Dorsolateral prefrontal cortex (tissue), 120 donors: ENCODE measurements at regions of chr17 and their contacts with region 1.

Region 1: DNA sequence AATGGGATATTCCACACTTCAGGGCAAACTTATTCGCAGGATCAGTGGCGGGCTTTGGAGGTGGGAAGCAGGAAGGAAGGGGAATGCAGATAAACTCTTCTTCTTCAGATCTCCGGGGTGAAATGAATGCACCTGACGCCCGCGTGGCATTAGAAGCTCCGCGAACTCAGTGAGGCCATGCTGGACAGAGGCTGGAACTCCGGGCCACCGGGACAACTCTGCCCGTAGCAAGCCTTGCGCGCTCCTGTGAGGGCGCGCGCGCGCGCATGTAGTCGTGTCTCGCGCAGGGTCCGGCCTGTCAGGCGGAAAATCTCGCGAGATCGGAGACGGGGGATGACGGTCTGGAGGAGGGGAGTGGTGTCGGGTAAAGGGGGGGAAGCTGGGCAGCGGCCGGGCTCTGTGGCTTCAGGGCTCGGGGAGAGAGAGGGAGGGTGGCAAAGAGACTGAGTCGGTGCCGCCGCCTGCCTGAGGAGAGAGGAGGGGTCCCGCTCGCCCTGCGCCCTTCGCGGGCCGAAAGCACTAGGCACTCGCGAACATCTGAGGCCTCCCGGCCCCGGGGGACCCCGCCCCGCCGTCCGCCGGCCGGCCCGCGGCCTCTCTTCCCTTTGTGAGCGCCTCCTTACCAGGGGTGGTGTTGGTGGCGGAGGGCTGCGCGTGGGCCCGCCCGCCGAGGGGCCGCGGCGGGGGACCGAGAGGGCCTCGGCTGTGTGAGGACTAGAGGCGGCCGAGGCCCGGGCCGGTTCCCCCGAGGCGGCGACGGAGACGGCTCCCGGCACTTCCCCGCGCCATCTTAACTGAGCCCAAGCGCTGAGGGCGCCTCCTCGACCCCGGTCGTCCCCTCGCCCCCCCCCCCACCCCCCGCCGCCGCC is at the start of gene TAOK1:
- DNase-seq: peak; percentile 98 to 99 (median 99)
- H3K4me3 ChIP-seq: peak within 1 kb of the TSS; percentile 62 to 99 (median 90)
- H3K27ac ChIP-seq: peak within 1 kb of the TSS; percentile 85 to 100 (median 97)
- H3K27me3 ChIP-seq: no peaks in the 10 kb centered on the region
- CTCF ChIP-seq: peak in 36 of 56 donors; percentile 5 to 62 (median 24)
- total RNA-seq, gene TAOK1: 102 to 159 (median 134) TPM

Region 2: DNA sequence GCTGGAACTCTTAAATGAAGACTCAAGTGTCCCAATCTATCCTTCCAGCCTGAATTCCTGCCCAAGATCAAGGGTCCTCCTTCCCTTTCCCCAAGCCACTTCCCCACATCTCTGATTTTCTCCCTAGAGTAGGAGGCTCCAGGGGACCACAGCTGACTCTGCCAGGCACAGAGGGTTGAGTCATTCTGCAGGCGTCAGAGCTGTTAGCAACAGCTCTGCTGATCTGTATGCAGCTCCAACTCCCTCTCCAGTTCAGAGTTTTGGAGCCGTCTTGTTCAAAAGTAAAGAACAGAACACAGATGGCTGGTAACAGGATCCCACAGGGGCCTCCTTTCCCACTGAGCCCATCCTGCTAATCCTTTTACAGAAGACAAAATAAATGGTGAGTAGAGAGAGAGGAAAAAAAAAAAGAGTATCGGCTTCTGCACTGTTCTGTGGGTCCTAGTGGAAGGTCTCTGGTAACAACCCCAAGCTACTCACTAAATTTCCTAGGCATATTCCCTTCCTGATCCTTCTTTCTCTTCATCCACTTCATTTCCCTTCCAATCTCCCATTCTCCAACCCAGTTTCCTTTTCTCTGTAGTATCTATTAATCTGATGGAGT is 13.4 kb before region 1 on chr17:
- intact Hi-C with region 1: loop called (anchors 2 kb)
- DNase-seq: peak; percentile 50 to 96 (median 90)
- H3K4me3 ChIP-seq: peak overlapping the region in 57 of 59 donors; percentile 10 to 69 (median 48)
- H3K27ac ChIP-seq: peak overlapping the region; percentile 83 to 100 (median 98)
- H3K27me3 ChIP-seq: no peaks in the 10 kb centered on the region
- CTCF ChIP-seq: peak in 17 of 56 donors; percentile 4 to 44 (median 22)

Region 3: DNA sequence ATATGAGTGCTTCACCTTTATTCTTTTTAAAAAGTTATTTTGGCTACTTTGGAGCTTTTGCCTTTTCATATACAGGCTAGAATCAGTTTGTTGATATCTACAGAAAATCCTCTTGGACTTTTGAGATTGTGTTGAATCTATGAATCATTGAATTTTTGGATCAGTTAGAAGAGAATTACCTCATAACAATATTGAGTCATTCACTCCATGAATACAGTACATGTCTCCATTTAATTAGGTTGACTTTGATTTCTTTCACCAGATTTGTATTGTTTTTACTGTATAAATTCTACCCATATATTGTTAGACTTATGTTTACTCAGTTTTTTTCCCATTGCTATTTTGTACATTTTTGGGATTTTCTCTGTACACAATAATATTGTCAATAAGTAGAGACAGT is 54.4 kb after region 1 on chr17:
- intact Hi-C with region 1: loop called in 1 of 2 experiments (anchors 5 kb)
- DNase-seq: no peak
- H3K4me3 ChIP-seq: no peak overlapping the region
- H3K27ac ChIP-seq: peak overlapping the region in 41 of 59 donors; percentile 2 to 91 (median 66)
- H3K27me3 ChIP-seq: no peaks in the 10 kb centered on the region
- CTCF ChIP-seq: no peak

Region 4: DNA sequence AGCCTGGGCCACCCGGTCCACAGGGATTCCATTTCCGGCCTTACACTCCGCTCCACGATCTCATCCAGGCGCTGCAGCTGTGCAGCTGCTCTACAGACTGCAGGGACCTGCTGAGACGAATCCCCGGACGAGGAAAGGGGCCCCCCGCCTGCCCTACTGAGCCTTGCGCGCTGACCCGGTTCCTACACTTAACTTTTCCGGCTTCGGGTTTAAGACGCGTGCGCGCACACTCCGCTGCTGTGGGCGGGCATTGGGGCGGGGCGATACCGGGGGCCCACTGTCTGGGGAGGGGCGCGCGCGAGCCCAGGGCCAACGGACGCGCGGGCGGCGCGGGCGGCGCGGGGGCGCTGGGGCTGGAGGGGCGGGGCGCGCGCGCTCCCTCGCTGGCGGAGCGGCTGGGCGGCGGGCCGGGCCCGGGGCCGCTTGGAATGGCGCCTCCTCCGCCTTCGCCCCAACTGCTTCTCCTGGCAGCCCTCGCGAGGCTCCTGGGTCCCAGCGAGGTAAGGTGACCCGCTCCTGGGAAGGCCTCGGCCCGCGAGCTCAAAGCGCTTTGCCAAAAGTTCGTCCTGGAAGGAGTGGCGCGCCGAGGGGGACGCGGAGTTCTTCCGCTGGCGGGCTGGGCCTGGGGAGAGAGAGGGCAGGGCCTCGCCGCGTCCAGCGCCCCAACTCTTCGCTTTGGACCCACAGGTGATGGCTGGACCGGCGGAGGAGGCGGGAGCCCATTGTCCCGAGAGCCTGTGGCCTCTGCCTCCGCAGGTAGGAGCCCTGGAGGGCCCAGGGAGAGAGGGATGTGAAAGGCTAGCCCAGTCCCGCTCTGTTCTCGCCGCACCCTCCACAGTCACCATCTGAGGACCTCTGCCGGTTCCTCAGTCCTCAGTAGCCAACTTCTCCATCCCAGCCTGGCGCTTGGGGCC is 178.4 kb after region 1 on chr17 and contains the start of gene TP53I13:
- intact Hi-C with region 1: loop called in 1 of 2 experiments (anchors 5 kb)
- DNase-seq: peak in 8 of 10 donors; percentile 61 to 85 (median 78)
- H3K4me3 ChIP-seq: peak within 1 kb of the TSS; percentile 39 to 89 (median 74)
- H3K27ac ChIP-seq: peak within 1 kb of the TSS; percentile 63 to 94 (median 87)
- H3K27me3 ChIP-seq: peaks cover 0 to 13% (median 0%) of the 10 kb centered on the region in 45 donors
- CTCF ChIP-seq: peak in 1 of 56 donors; percentile 14
- total RNA-seq, gene TP53I13: 10.1 to 40.2 (median 20.1) TPM

Region 5: GRCh38 chr17:29603109-29603674 is 213.0 kb after region 1 on chr17:
- intact Hi-C with region 1: no loop called
- DNase-seq: peak in 1 of 10 donors; percentile 10
- H3K4me3 ChIP-seq: no peak overlapping the region
- H3K27ac ChIP-seq: peak overlapping the region in 18 of 59 donors; percentile 3 to 61 (median 32)
- H3K27me3 ChIP-seq: no peaks in the 10 kb centered on the region
- CTCF ChIP-seq: no peak